MCF 10A (cell line): ENCODE measurements at regions of chr20 and their contacts with region 1.

Region 1: GRCh38 chr20:53869466-53870258 is 200.7 kb downstream of the BCAS1 start:
- DNase-seq: peak; percentile 90
- H3K4me3 Mint-ChIP-seq: peak overlapping the region; percentile 36
- H3K27ac Mint-ChIP-seq: peak overlapping the region; percentile 96
- H3K4me1 Mint-ChIP-seq: peaks cover 49% of the 10 kb centered on the region
- H3K27me3 Mint-ChIP-seq: no peaks in the 10 kb centered on the region
- CTCF ChIP-seq: peak; percentile 65

Region 2: DNA sequence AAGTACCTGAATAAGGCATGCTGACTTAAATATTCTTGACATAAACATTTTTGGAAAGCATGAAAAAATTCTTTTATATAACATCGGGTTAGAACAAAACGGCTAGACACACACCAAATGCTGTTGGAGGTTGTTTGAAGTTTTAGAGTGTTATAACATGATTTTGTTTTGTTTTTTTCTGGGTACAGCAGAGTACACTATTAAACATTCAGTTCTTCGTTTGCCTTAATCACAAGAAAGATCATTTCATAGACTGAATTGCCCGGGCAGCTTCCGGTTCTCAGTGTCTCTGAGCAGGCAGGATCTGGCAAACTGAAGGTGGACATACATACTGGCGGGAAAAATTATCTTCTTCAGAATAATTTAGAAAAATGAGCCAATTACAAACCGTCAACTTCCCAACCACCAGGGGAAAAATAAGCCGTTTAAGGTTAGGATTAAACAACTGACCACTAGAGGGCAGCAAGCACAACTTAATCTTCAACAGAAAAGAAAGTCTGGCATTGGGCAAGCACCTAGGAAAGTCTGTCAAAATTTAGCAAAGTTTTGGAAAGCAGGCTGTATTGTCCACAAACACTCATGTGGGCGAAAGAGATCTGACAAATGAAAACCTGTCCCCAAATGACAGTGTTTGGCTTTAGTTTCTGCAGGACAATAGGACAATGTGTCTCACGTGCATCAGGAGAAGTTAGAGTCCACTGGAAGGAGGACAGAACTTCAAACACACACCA is 291.0 kb before region 1 on chr20:
- CTCF ChIA-PET with region 1: interaction called, 23 read pairs
- POLR2A ChIA-PET with region 1: interaction called, 56 read pairs
- intact Hi-C with region 1: loop called (anchors 1 kb)
- DNase-seq: peak; percentile 91
- H3K4me3 Mint-ChIP-seq: peak overlapping the region; percentile 54
- H3K27ac Mint-ChIP-seq: peak overlapping the region; percentile 90
- H3K4me1 Mint-ChIP-seq: peaks cover 30% of the 10 kb centered on the region
- H3K27me3 Mint-ChIP-seq: no peaks in the 10 kb centered on the region
- CTCF ChIP-seq: peak; percentile 92

Region 3: GRCh38 chr20:53738039-53738944 is 131.4 kb before region 1 on chr20:
- CTCF ChIA-PET with region 1: interaction called, 4 read pairs
- POLR2A ChIA-PET with region 1: interaction called, 15 read pairs
- intact Hi-C with region 1: no loop called
- DNase-seq: no peak
- H3K4me3 Mint-ChIP-seq: no peak overlapping the region
- H3K27ac Mint-ChIP-seq: no peak overlapping the region
- H3K4me1 Mint-ChIP-seq: peaks cover 32% of the 10 kb centered on the region
- H3K27me3 Mint-ChIP-seq: no peaks in the 10 kb centered on the region
- CTCF ChIP-seq: no peak

Region 4: GRCh38 chr20:53805895-53806384 is 63.7 kb before region 1 on chr20:
- CTCF ChIA-PET with region 1: interaction called, 4 read pairs
- POLR2A ChIA-PET with region 1: interaction called, 22 read pairs
- intact Hi-C with region 1: no loop called
- DNase-seq: peak; percentile 95
- H3K4me3 Mint-ChIP-seq: peak overlapping the region; percentile 19
- H3K27ac Mint-ChIP-seq: peak overlapping the region; percentile 86
- H3K4me1 Mint-ChIP-seq: peaks cover 25% of the 10 kb centered on the region
- H3K27me3 Mint-ChIP-seq: no peaks in the 10 kb centered on the region
- CTCF ChIP-seq: no peak

Region 5: GRCh38 chr20:53852019-53852418 is 17.6 kb before region 1 on chr20:
- CTCF ChIA-PET with region 1: interaction called, 11 read pairs
- POLR2A ChIA-PET with region 1: interaction called, 14 read pairs
- intact Hi-C with region 1: no loop called
- DNase-seq: no peak
- H3K4me3 Mint-ChIP-seq: no peak overlapping the region
- H3K27ac Mint-ChIP-seq: no peak overlapping the region
- H3K4me1 Mint-ChIP-seq: no peaks in the 10 kb centered on the region
- H3K27me3 Mint-ChIP-seq: no peaks in the 10 kb centered on the region
- CTCF ChIP-seq: no peak

Region 6: DNA sequence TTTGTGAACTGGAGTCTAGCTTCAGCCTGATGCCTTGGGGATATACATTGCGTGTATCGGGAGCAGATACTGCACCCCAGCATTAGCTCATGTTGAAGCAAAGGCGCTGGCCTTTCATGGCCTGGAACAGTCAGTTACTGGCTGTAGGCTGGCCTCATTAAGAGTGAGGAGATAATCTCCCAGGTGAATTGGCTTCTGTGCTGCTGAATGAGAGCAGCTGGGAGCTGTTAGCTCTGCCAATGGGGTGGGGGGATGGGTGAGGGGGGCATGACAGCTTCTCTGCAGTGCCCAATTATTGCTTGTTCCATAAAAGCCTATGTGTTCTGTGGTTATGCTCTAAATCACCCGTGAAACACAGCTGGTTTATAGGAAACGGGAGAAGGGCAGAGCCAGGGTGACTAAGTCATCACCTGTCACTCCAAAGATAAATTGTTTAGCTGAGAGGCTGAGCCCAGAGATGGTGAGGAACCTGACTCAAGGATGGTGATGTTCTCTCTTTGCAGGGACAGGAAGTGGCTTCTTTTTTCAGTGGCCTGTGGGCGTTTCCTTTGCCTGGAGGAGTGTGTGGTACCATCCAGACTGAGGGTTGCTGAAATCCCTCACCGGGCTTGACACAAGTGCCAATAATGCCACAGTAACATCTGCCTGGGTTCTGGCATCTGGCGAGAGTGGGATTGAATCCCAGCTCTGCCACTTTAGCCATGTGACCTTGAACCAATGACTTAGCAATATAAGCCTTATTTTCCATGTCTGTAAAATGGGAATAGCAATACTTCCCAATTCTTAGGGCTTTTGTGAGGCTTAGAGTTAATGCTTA is 29.9 kb after region 1 on chr20:
- CTCF ChIA-PET with region 1: interaction called, 12 read pairs
- POLR2A ChIA-PET with region 1: interaction called, 31 read pairs
- intact Hi-C with region 1: no loop called
- DNase-seq: peak; percentile 89
- H3K4me3 Mint-ChIP-seq: peak overlapping the region; percentile 39
- H3K27ac Mint-ChIP-seq: peak overlapping the region; percentile 75
- H3K4me1 Mint-ChIP-seq: peaks cover 27% of the 10 kb centered on the region
- H3K27me3 Mint-ChIP-seq: no peaks in the 10 kb centered on the region
- CTCF ChIP-seq: no peak

Region 7: GRCh38 chr20:53939572-53940359 is 70.1 kb after region 1 on chr20:
- CTCF ChIA-PET with region 1: interaction called, 9 read pairs
- POLR2A ChIA-PET with region 1: interaction called, 12 read pairs
- intact Hi-C with region 1: no loop called
- DNase-seq: peak; percentile 95
- H3K4me3 Mint-ChIP-seq: no peak overlapping the region
- H3K27ac Mint-ChIP-seq: peak overlapping the region; percentile 18
- H3K4me1 Mint-ChIP-seq: peaks cover 19% of the 10 kb centered on the region
- H3K27me3 Mint-ChIP-seq: no peaks in the 10 kb centered on the region
- CTCF ChIP-seq: peak; percentile 73

Region 8: DNA sequence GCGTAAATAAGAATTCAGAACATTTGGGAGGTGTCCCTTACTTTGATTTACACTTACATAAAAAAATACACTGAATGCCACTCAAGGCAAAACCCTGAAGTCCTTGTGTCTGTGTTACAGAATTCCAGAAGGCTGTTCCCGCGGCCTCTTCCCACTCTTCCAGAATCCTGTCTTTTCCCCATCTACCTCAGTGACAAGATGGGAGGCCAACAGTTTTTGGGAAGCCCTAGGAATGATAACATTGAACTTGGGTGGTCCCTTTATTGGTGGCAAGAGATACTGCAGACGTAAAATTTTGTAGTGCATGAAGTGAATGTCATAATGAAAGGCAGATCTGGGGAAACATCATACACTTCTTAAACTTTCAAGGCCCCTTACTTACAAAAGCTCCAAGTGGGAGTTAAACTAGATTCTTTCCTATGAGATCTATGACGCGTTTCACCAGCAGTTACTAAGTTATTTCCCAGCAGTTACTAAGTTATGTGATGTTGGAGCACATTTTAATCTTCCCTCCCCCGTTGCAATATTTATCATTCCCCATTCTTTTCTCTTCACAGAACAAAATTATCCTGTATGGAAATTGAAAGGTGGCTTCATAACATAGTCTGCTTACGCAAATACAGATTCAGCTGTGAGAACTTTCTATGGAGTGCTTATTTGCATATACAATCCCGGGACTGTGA is 121.2 kb after region 1 on chr20:
- CTCF ChIA-PET with region 1: no interaction called
- POLR2A ChIA-PET with region 1: no interaction called
- intact Hi-C with region 1: no loop called
- DNase-seq: no peak
- H3K4me3 Mint-ChIP-seq: no peak overlapping the region
- H3K27ac Mint-ChIP-seq: no peak overlapping the region
- H3K4me1 Mint-ChIP-seq: no peaks in the 10 kb centered on the region
- H3K27me3 Mint-ChIP-seq: peaks cover 42% of the 10 kb centered on the region
- CTCF ChIP-seq: no peak

Region 9: DNA sequence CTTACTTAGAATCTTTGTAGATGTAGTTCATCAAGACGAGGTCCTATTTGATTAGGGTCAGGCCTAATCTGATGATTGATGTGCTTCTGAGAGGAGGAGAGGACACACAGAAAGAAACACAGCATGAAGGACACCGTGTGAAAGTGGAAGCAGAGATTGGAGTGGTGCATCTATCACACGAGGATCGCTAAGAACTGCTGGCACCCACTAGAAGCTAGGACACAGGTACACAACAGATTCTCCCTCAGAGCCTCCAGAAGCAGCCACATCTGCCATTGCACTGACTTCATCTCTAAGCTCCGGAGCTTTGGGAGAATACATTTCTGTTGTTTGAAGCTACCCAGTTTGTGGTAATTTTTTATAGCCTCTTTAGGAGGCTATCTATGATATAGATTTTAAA is 442.9 kb after region 1 on chr20:
- CTCF ChIA-PET with region 1: no interaction called
- POLR2A ChIA-PET with region 1: no interaction called
- intact Hi-C with region 1: no loop called
- DNase-seq: no peak
- H3K4me3 Mint-ChIP-seq: no peak overlapping the region
- H3K27ac Mint-ChIP-seq: no peak overlapping the region
- H3K4me1 Mint-ChIP-seq: no peaks in the 10 kb centered on the region
- H3K27me3 Mint-ChIP-seq: peaks cover 8% of the 10 kb centered on the region
- CTCF ChIP-seq: no peak

Region 10: DNA sequence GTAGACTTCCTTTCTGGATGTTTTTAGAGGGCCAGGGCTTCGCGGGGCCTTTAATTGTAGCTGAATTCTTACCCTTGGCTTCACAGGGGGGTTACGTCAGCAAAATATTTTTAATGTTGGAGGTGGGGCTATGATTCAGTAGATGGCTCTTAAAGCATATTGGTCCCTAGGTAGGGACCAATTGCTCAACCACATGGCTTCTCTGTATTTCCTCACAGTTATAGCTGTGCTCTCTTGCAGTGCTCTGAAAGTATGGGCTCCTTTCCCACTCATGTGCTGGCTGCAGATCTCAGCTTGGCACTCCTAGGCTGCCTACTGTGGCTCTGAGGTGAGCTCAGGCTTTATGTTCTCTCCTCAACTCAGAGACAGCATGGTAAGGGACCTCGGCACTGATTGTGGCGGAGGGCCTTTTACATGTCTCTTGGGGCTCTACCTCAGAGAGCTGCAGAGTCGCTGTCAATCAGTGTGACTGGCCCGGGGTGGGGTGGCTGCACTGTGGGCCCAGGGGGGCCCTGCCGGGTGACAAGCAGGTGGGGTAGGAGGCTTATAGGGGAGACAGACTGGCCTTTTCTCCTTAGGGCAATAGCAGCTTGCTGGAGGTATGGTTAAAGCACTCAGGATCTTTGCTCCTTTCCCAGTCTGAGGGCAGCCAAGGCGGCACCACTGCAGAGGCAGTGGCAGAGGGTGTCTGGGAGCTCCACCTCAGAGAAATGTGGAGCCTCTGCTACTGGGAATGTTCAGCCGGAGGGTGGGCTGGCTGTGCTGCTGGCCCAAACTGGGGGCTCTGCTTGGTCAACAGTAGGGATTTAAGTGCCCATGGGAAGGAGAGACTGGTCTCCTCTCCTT is 923.9 kb after region 1 on chr20:
- CTCF ChIA-PET with region 1: no interaction called
- POLR2A ChIA-PET with region 1: no interaction called
- intact Hi-C with region 1: no loop called
- DNase-seq: no peak
- H3K4me3 Mint-ChIP-seq: no peak overlapping the region
- H3K27ac Mint-ChIP-seq: no peak overlapping the region
- H3K4me1 Mint-ChIP-seq: no peaks in the 10 kb centered on the region
- H3K27me3 Mint-ChIP-seq: no peaks in the 10 kb centered on the region
- CTCF ChIP-seq: no peak